Esophagus muscularis mucosa (tissue), 4 donors: ENCODE measurements at regions of chr1 and their contacts with region 1.

Region 1: DNA sequence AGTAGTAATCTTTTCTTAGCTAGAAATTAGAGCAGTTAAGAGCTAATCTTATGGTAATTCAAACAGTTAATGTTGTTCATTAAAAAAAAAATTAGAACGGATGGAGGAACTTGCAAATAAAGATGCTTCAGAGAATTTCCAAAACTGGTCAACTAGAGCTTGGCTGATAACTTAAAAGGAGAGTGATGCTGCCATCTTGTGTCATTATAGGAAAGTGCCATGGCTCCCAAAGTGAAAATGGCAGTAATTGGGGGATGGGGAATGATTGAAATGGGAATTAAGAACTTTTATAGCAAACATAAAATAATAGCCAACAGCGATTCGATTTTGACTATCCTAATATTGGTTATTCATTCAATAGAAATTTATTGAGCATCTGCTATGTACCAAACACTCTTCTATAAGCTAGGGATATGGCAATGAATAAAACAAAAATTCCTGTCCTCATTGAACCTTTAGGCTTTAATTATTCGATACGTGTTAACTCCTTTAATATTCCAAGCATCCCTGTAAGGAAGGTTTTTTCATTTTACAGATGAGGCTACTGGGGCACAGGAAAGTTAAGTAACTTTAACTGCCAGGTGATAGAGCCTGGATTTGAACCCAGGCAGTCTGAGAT is 5.7 kb upstream of the PLPP3 start:
- DNase-seq: no peak
- H3K4me3 ChIP-seq: no peak overlapping the region
- H3K27ac ChIP-seq: no peak overlapping the region
- H3K4me1 ChIP-seq: peaks cover 2 to 13% (median 5%) of the 10 kb centered on the region in 4 donors
- H3K27me3 ChIP-seq: no peaks in the 10 kb centered on the region
- CTCF ChIP-seq: peak; percentile 89 to 93 (median 90)
- EP300 ChIP-seq: no peak
- POLR2A ChIP-seq: no peak

Region 2: DNA sequence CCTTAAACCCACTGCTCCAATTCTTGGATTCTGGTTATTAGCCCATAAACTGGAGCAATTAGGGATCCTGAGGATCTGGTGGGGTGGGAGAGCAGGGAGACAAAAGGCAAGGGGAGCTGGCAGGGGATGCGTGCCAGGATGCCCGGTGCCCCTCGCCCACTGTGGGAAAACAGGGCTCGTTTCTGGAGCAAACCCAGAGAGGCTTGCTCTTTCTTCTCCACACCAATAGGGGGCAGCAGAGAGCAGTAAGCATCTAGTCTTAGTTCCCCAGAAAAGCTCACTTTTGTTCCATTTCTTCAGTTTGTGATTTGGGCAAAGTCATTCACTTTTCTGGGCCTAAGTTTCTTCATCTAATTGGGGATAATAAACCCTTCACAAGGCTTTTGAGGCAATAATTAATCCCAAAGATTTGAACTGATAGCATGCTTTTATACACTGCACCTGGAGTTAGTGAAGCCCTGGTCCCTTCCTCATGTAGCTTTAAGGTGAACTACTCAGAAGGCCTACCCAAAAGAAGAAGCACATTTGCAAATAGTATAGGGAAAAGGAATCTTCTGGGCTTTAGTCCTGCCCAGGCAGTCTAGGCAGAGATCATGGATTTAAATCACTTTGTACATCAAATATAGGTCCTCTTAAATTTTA is 1209.3 kb before region 1 on chr1:
- intact Hi-C with region 1: loop called (anchors 5 kb)
- DNase-seq: peak; percentile 84
- H3K4me3 ChIP-seq: no peak overlapping the region
- H3K27ac ChIP-seq: peak overlapping the region; percentile 3 to 57 (median 44)
- H3K4me1 ChIP-seq: peaks cover 0 to 15% (median 9%) of the 10 kb centered on the region in 4 donors
- H3K27me3 ChIP-seq: no peaks in the 10 kb centered on the region
- CTCF ChIP-seq: peak; percentile 80 to 96 (median 94)
- EP300 ChIP-seq: no peak
- POLR2A ChIP-seq: no peak

Region 3: DNA sequence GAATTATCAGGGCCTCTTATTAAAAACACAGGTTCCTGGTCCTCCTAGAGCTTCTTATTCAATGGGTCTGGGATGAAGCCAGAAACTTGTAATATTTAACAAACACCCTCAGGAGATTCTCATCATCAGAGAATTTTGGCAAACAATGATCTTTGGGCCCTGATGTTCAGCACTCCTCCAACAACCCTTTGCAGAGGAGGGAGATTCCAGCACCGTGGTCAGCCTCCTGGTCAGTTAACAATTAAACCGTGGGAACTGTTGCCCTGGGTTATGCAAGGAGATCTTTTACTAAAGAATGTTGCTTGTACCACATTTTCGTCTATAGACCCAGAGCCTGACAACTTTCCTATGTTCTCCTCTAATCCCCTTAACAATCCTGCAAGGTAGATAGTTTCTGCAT is 300.1 kb before region 1 on chr1:
- intact Hi-C with region 1: no loop called
- DNase-seq: no peak
- H3K4me3 ChIP-seq: no peak overlapping the region
- H3K27ac ChIP-seq: peak overlapping the region in 1 of 4 donors; percentile 10
- H3K4me1 ChIP-seq: peaks cover 4 to 18% (median 11%) of the 10 kb centered on the region in 4 donors
- H3K27me3 ChIP-seq: no peaks in the 10 kb centered on the region
- CTCF ChIP-seq: no peak
- EP300 ChIP-seq: no peak
- POLR2A ChIP-seq: no peak

Region 4: GRCh38 chr1:56502700-56503245 is 82.2 kb before region 1 on chr1:
- intact Hi-C with region 1: no loop called
- DNase-seq: no peak
- H3K4me3 ChIP-seq: no peak overlapping the region
- H3K27ac ChIP-seq: no peak overlapping the region
- H3K4me1 ChIP-seq: peaks cover 32 to 79% (median 56%) of the 10 kb centered on the region in 4 donors
- H3K27me3 ChIP-seq: no peaks in the 10 kb centered on the region
- CTCF ChIP-seq: no peak
- EP300 ChIP-seq: no peak
- POLR2A ChIP-seq: no peak

Region 5: GRCh38 chr1:56844545-56845136 is 259.6 kb after region 1 on chr1:
- intact Hi-C with region 1: no loop called
- DNase-seq: peak; percentile 89
- H3K4me3 ChIP-seq: no peak overlapping the region
- H3K27ac ChIP-seq: no peak overlapping the region
- H3K4me1 ChIP-seq: no peaks in the 10 kb centered on the region
- H3K27me3 ChIP-seq: peaks cover 0 to 12% (median 0%) of the 10 kb centered on the region in 4 donors
- CTCF ChIP-seq: no peak
- EP300 ChIP-seq: no peak
- POLR2A ChIP-seq: no peak